ENCODE measurements at regions of chr7 and their contacts with region 1.

Region 1: DNA sequence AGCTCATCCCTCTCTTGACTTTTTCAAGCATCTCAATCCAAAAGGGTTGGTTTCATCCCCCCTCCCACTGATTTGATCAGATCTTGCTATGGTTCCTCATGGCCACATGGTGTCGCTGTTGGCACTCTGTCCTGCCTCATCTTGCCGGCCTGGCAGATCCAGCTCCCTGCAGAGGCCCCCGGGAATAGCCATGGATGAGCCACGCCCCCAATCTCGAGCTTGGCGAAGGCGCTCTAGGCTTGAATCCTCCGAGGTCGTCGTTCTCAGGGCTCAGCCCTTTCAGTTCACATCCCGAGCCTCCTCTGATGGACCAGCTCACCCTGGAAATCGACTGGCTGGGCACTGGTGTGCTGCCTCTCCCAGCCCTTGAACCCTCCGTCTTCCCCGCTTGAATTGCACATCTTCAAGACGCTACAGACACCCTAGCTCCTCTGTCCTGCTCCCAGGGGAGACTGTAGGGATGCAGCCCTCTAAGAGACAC is 628.7 kb downstream of the TYW1 start:
- DNase-seq: peak; percentile 33
- H3K4me3 Mint-ChIP-seq: no peak overlapping the region
- H3K27ac Mint-ChIP-seq: no peak overlapping the region
- H3K4me1 Mint-ChIP-seq: peaks cover 3% of the 10 kb centered on the region
- H3K27me3 Mint-ChIP-seq: peaks cover 3% of the 10 kb centered on the region

Region 2: DNA sequence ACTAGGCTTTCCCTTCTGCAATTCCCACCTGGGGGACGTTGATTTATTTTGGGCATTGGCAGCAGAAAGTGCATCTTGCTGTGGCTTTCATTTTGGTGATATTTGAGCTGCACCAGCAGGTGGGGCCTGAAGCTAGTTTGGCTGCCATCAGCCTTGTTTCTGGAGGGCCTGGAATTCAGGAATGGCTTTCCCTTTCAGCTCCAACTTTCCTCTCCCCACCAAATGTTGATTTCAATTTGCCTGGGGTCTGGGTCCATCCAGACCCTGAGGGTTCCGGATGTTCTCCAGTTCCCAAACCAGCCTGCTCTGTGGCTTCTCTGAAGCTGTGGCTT is 11.7 kb after region 1 on chr7:
- CTCF ChIA-PET with region 1: interaction called, 12 read pairs
- POLR2A ChIA-PET with region 1: no interaction called
- intact Hi-C with region 1: no loop called
- DNase-seq: no peak
- H3K4me3 Mint-ChIP-seq: no peak overlapping the region
- H3K27ac Mint-ChIP-seq: no peak overlapping the region
- H3K4me1 Mint-ChIP-seq: no peaks in the 10 kb centered on the region
- H3K27me3 Mint-ChIP-seq: peaks cover 2% of the 10 kb centered on the region